Endothelial cell of umbilical vein (primary cell): ENCODE measurements at regions of chr2 and their contacts with region 1.

Region 1: DNA sequence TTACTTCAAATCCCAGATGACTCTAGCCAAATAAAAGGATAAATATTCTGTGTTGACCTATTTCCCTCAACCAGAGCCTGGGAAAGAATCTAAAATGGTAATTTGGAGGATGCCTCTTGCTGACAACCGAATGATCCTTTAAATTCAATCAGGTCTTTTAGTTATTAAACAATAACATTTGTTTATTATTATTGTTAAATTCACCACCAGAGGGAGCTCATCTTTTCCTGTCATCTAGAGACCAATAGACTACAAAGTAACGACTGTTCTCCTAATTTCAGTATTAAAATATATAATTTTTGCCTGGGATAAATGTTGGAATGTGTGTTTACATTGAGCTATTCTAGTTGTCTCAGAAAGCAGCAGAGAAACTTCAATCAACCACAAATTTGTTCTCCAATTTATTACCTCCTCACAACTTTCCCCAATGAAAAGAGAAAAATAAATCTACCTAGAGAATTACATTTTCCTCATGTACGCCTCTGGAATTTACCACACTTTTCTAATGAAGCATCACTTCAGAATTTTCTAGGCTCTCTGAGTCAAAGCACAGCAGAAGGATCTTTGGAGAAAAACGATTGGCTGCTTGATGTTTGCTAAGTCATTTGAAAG is 142.7 kb downstream of the SCG2 start:
- DNase-seq: peak; percentile 26
- H3K4me3 ChIP-seq: no peak overlapping the region
- H3K27ac ChIP-seq: no peak overlapping the region
- H3K4me1 ChIP-seq: peaks cover 6% of the 10 kb centered on the region
- H3K27me3 ChIP-seq: no peaks in the 10 kb centered on the region
- CTCF ChIP-seq: peak; percentile 12 to 17
- POLR2A ChIP-seq: no peak

Region 2: GRCh38 chr2:223113161-223113560 is 346.3 kb before region 1 on chr2:
- CTCF ChIA-PET with region 1: no interaction called
- POLR2A ChIA-PET with region 1: no interaction called
- dilution Hi-C with region 1: no loop called
- intact Hi-C with region 1: no loop called
- DNase-seq: peak; percentile 14
- H3K4me3 ChIP-seq: no peak overlapping the region
- H3K27ac ChIP-seq: no peak overlapping the region
- H3K4me1 ChIP-seq: peaks cover 18% of the 10 kb centered on the region
- H3K27me3 ChIP-seq: no peaks in the 10 kb centered on the region
- CTCF ChIP-seq: no peak
- POLR2A ChIP-seq: no peak

Region 3: DNA sequence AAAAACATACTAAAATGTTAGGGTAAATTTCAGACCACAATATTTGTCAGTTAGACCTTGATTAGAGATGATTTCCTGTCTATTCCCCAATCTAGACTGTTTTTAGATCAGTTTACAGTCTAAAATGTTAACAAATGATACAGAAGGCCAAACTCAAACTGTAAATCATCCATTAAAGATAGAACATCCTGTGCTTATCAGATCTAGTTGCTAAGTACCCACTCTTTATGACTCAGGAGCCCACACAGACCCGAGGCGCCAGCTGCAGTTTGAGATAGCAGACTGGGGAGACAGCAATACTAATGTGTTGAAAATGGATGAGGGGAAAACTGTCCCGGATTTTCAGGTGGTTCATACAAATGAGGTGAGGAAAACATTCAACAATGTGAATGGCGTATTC is 29.4 kb after region 1 on chr2:
- CTCF ChIA-PET with region 1: interaction called, 17 read pairs
- POLR2A ChIA-PET with region 1: no interaction called
- dilution Hi-C with region 1: no loop called
- intact Hi-C with region 1: no loop called
- DNase-seq: peak; percentile 64
- H3K4me3 ChIP-seq: no peak overlapping the region
- H3K27ac ChIP-seq: no peak overlapping the region
- H3K4me1 ChIP-seq: no peaks in the 10 kb centered on the region
- H3K27me3 ChIP-seq: no peaks in the 10 kb centered on the region
- CTCF ChIP-seq: no peak
- POLR2A ChIP-seq: no peak

Region 4: GRCh38 chr2:223601932-223602666 is 142.7 kb after region 1 on chr2 and contains the start of gene SCG2:
- CTCF ChIA-PET with region 1: interaction called, 33 read pairs
- POLR2A ChIA-PET with region 1: no interaction called
- dilution Hi-C with region 1: no loop called
- intact Hi-C with region 1: loop called (anchors 1 kb)
- DNase-seq: peak; percentile 76
- H3K4me3 ChIP-seq: no peak within 1 kb of the TSS
- H3K27ac ChIP-seq: no peak within 1 kb of the TSS
- H3K4me1 ChIP-seq: no peaks in the 10 kb centered on the region
- H3K27me3 ChIP-seq: peaks cover 10 to 13% of the 10 kb centered on the region in 2 experiments
- CTCF ChIP-seq: no peak
- POLR2A ChIP-seq: no peak
- total RNA-seq, gene SCG2: not detected in 2 replicates

Region 5: GRCh38 chr2:223669453-223670225 is 210.2 kb after region 1 on chr2:
- CTCF ChIA-PET with region 1: interaction called, 4 read pairs
- POLR2A ChIA-PET with region 1: no interaction called
- dilution Hi-C with region 1: no loop called
- intact Hi-C with region 1: loop called (anchors 10 kb)
- DNase-seq: no peak
- H3K4me3 ChIP-seq: no peak overlapping the region
- H3K27ac ChIP-seq: no peak overlapping the region
- H3K4me1 ChIP-seq: no peaks in the 10 kb centered on the region
- H3K27me3 ChIP-seq: peaks cover 0 to 6% of the 10 kb centered on the region in 2 experiments
- CTCF ChIP-seq: no peak
- POLR2A ChIP-seq: no peak